ENCODE measurements at regions of chr2 and their contacts with region 1.

Region 1: DNA sequence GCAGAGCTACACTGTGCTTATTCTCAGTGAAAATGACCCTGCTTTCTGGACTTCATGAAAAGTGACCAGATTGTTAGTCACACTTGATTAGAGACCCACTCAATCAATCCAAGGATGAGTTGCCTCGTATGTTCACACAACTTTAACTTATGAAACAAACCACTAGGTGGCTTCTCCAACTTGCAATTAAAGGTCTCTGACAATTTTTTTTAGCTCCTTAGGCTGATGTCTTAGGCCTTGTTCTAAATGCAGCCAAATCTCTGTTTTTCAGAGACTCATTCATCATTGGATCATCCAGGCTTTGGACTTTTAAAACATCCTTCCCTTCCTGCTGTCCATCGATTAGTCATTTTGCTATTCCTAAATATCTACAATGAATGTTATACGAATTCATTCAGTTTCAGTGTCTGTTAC is 63.4 kb downstream of the MREG start:
- DNase-seq: peak; percentile 36
- ATAC-seq: peak; percentile 83
- H3K4me3 ChIP-seq: no peak overlapping the region
- H3K27ac ChIP-seq: no peak overlapping the region
- H3K4me1 ChIP-seq: no peaks in the 10 kb centered on the region
- H3K27me3 ChIP-seq: no peaks in the 10 kb centered on the region
- CTCF ChIP-seq: peak; percentile 30 to 71 (median 65); a peak in 4 of 6 replicates
- POLR2A ChIP-seq: no peak
- RAD21 ChIP-seq: peak; percentile 72

Region 2: DNA sequence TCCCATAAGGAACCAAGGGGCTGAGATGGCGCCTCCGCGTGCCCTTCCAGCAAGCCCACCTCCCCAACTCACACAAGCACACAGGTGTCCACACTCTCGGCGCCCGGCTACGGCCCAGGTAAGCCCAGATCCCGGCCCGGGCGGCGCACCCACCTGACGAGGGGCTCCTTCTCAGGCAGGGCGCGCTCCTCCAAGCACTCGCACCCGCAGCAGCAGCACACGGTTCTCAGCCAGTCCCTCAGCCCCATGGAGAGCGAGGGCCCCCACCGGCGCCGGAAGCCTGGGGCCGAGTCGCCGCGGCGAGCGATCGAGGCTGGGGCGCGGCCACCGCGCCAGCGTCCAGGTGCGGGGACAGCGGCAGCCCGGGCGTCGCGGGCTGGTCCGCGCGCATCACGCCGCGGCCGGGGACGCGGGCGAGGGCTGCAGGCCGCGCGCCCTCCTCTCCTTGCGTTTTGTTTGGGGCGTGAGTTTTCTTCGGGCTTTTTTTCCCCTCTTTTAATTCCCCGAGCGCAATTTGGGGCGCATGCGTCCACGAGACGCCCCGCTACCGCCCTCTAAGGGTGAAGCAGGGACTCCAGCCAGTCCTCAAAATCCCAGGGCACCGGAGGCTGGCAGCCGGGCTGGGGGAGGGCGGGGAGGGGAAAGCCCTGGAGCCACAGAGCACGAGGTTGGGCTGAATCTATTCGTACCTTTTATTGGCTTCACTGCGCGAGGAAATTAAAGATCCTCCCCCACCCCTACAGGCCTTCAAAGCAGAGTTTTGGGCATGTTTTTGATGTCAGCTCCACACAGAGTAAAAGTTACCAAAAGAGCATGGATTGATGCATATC is 63.3 kb after region 1 on chr2 and contains the start of gene MREG:
- CTCF ChIA-PET with region 1: interaction called, 5 read pairs
- POLR2A ChIA-PET with region 1: no interaction called
- RAD21 ChIA-PET with region 1: no interaction called
- intact Hi-C with region 1: loop called (anchors 5 kb)
- DNase-seq: peak; percentile 57
- ATAC-seq: peak; percentile 90
- H3K4me3 ChIP-seq: peak within 1 kb of the TSS; percentile 78 to 80
- H3K27ac ChIP-seq: peak within 1 kb of the TSS; percentile 60
- H3K4me1 ChIP-seq: peaks cover 12 to 24% of the 10 kb centered on the region in 2 experiments; a peak in 3 of 4 replicates
- H3K27me3 ChIP-seq: no peaks in the 10 kb centered on the region
- CTCF ChIP-seq: peak; percentile 35 to 79 (median 59); a peak in 5 of 6 replicates
- POLR2A ChIP-seq: no peak
- RAD21 ChIP-seq: peak; percentile 24
- total RNA-seq, gene MREG: 16.9 TPM

Region 3: GRCh38 chr2:216023055-216023648 is 73.2 kb after region 1 on chr2:
- CTCF ChIA-PET with region 1: interaction called, 5 read pairs
- POLR2A ChIA-PET with region 1: no interaction called
- RAD21 ChIA-PET with region 1: no interaction called
- intact Hi-C with region 1: loop called (anchors 1 kb)
- DNase-seq: peak; percentile 42
- ATAC-seq: peak; percentile 96
- H3K4me3 ChIP-seq: no peak overlapping the region
- H3K27ac ChIP-seq: no peak overlapping the region
- H3K4me1 ChIP-seq: no peaks in the 10 kb centered on the region
- H3K27me3 ChIP-seq: no peaks in the 10 kb centered on the region
- CTCF ChIP-seq: peak; percentile 73 to 76 (median 74); a peak in 5 of 6 replicates
- POLR2A ChIP-seq: no peak
- RAD21 ChIP-seq: peak; percentile 58